Activated CD4-positive, alpha-beta T cell treated with anti-CD3 and anti-CD28 coated beads, Interleukin-2, amount 10 ng/mL, durations not matched to agents 7 days and 5 days (primary cell): ENCODE measurements at regions of chr9 and their contacts with region 1.

Region 1: DNA sequence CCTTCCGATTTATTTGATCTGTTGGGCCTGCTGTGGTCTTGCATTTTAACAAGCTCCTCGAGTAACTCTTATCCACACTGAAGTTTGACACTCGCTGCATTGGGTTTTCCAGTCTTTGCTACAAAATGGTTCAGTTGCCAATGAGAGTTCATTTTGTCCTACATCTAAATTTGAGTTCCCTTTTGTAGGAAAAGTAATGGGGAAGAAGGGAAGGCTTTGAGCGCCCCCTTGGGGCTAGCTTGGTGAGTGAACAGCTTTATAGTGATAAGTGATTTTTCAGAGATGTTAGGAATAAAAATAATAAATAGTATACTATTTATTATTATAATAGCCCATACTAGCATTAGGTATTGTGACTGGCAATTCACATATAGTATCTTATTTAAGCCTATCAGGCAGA is 89.9 kb upstream of the GNAQ start:
- DNase-seq: peak; percentile 64
- H3K4me3 Mint-ChIP-seq: no peak overlapping the region
- H3K27ac Mint-ChIP-seq: no peak overlapping the region
- H3K4me1 Mint-ChIP-seq: peaks cover 40% of the 10 kb centered on the region
- H3K27me3 Mint-ChIP-seq: peaks cover 7% of the 10 kb centered on the region

Region 2: GRCh38 chr9:77977210-77977611 is 144.3 kb before region 1 on chr9:
- CTCF ChIA-PET with region 1: interaction called, 10 read pairs
- POLR2A ChIA-PET with region 1: no interaction called
- DNase-seq: peak; percentile 62
- H3K4me3 Mint-ChIP-seq: no peak overlapping the region
- H3K27ac Mint-ChIP-seq: peak overlapping the region; percentile 11
- H3K4me1 Mint-ChIP-seq: peaks cover 53% of the 10 kb centered on the region
- H3K27me3 Mint-ChIP-seq: no peaks in the 10 kb centered on the region

Region 3: GRCh38 chr9:78144663-78145377 is 23.3 kb after region 1 on chr9:
- CTCF ChIA-PET with region 1: no interaction called
- POLR2A ChIA-PET with region 1: no interaction called
- DNase-seq: no peak
- H3K4me3 Mint-ChIP-seq: no peak overlapping the region
- H3K27ac Mint-ChIP-seq: no peak overlapping the region
- H3K4me1 Mint-ChIP-seq: peaks cover 3% of the 10 kb centered on the region
- H3K27me3 Mint-ChIP-seq: no peaks in the 10 kb centered on the region